CD14-positive monocyte (primary cell): ENCODE measurements at regions of chr9 and their contacts with region 1.

Region 1: GRCh38 chr9:75148561-75148960 is 60.2 kb downstream of the OSTF1 start:
- DNase-seq: no peak
- H3K4me3 ChIP-seq: peak overlapping the region in 1 of 3 experiments; percentile 20
- H3K4me3 Mint-ChIP-seq: no peak overlapping the region
- H3K27ac ChIP-seq: peak overlapping the region in 1 of 2 donors; percentile 73
- H3K27ac Mint-ChIP-seq: peak overlapping the region in 3 of 7 donors; percentile 55 to 82 (median 69)
- H3K4me1 ChIP-seq: peaks cover 36 to 64% of the 10 kb centered on the region in 2 donors
- H3K4me1 Mint-ChIP-seq: peaks cover 57% of the 10 kb centered on the region
- H3K27me3 ChIP-seq: no peaks in the 10 kb centered on the region
- H3K27me3 Mint-ChIP-seq: peaks cover 0 to 4% (median 0%) of the 10 kb centered on the region in 3 donors
- CTCF ChIP-seq: no peak

Region 2: DNA sequence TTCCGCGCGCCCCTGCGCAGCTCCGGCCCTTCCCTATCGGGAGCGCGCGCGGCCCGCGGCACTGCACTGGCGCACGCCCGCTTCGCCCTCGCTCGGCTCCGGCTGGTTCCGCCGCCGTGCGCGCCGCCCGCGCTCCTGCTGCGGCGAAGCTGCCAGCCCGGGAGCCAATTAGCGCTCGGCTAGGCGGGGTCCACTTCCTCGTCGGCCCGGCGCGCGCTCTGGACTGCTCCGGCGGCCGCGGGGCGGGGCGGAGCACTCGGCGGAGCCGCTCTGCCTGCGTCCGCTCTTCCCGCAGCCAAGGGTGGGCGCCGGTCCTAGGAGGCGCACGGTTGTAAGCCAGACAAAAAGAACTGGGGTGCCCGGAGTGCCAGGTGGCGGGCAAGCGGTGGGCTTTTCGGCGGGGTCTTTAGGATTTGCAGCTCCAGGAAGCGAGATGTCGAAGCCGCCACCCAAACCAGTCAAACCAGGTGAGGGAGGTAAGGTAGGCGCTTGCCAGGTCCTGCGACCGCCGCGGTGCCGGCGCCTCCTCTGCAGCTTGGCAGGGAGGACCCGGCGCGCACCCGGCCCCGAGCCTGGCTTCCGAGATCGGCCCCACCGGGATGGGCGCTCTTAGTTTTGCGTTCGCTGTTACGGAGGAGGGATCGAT is 60.2 kb before region 1 on chr9 and contains the start of gene OSTF1:
- intact Hi-C with region 1: loop called in 1 of 2 experiments (anchors 10 kb)
- DNase-seq: peak; percentile 95 to 96 (median 96)
- H3K4me3 ChIP-seq: peak within 1 kb of the TSS; percentile 69 to 98 (median 97)
- H3K4me3 Mint-ChIP-seq: peak within 1 kb of the TSS; percentile 95 to 100
- H3K27ac ChIP-seq: peak within 1 kb of the TSS; percentile 94 to 98
- H3K27ac Mint-ChIP-seq: peak within 1 kb of the TSS; percentile 90 to 96 (median 93)
- H3K4me1 ChIP-seq: peaks cover 45 to 47% of the 10 kb centered on the region in 2 donors
- H3K4me1 Mint-ChIP-seq: peaks cover 51% of the 10 kb centered on the region
- H3K27me3 ChIP-seq: no peaks in the 10 kb centered on the region
- H3K27me3 Mint-ChIP-seq: no peaks in the 10 kb centered on the region
- CTCF ChIP-seq: no peak
- polyA plus RNA-seq, gene OSTF1: 59.8 to 296 (median 240) TPM

Region 3: GRCh38 chr9:75108555-75108954 is 40.0 kb before region 1 on chr9:
- intact Hi-C with region 1: loop called in 1 of 2 experiments (anchors 5 kb)
- DNase-seq: peak; percentile 58 to 75 (median 74)
- H3K4me3 ChIP-seq: no peak overlapping the region
- H3K4me3 Mint-ChIP-seq: no peak overlapping the region
- H3K27ac ChIP-seq: peak overlapping the region; percentile 50 to 67
- H3K27ac Mint-ChIP-seq: peak overlapping the region; percentile 61 to 91 (median 87)
- H3K4me1 ChIP-seq: peaks cover 17 to 42% of the 10 kb centered on the region in 2 donors
- H3K4me1 Mint-ChIP-seq: peaks cover 65% of the 10 kb centered on the region
- H3K27me3 ChIP-seq: no peaks in the 10 kb centered on the region
- H3K27me3 Mint-ChIP-seq: no peaks in the 10 kb centered on the region
- CTCF ChIP-seq: no peak

Region 4: GRCh38 chr9:75130621-75131230 is 17.8 kb before region 1 on chr9:
- intact Hi-C with region 1: no loop called
- DNase-seq: no peak
- H3K4me3 ChIP-seq: no peak overlapping the region
- H3K4me3 Mint-ChIP-seq: no peak overlapping the region
- H3K27ac ChIP-seq: peak overlapping the region in 1 of 2 donors; percentile 77
- H3K27ac Mint-ChIP-seq: peak overlapping the region; percentile 27 to 77 (median 57)
- H3K4me1 ChIP-seq: peaks cover 10 to 12% of the 10 kb centered on the region in 2 donors
- H3K4me1 Mint-ChIP-seq: peaks cover 14% of the 10 kb centered on the region
- H3K27me3 ChIP-seq: no peaks in the 10 kb centered on the region
- H3K27me3 Mint-ChIP-seq: no peaks in the 10 kb centered on the region
- CTCF ChIP-seq: no peak

Region 5: DNA sequence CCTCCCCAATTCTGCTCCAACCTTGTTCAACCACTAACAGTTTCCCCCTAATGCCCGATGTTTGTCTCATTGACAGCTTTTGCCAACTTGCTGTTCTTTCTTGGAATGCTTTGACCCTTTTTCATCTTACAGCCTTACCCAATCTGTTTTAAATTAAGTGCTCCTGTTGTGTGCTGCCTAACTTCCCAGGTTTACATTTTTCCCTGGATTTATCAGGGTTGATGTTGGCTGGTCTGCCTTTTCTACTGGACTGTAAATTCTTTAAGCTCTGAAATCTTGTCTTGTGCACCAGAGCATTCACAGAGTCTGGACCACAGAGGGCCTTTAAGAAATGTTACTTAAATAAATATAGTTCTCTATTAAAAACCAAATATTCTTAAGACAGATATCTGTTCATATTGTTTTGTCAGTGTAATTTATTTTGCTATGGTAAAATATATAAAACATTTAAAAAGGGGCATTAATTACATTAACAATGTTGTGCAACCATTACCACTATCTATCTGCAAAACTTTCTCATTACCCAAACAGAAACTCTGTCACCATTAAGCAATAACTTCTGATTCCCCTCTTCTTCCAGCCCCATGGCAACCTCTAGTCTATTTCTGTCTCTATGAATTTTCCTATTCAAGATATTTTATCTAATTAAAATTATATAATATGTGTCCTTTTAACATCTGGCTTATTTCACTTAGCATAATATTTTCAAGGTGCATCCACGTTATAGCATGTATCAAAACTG is 12.7 kb after region 1 on chr9:
- intact Hi-C with region 1: no loop called
- DNase-seq: no peak
- H3K4me3 ChIP-seq: no peak overlapping the region
- H3K4me3 Mint-ChIP-seq: no peak overlapping the region
- H3K27ac ChIP-seq: peak overlapping the region in 1 of 2 donors; percentile 55
- H3K27ac Mint-ChIP-seq: peak overlapping the region in 2 of 7 donors; percentile 15 to 78
- H3K4me1 ChIP-seq: peaks cover 4 to 16% of the 10 kb centered on the region in 2 donors
- H3K4me1 Mint-ChIP-seq: peaks cover 18% of the 10 kb centered on the region
- H3K27me3 ChIP-seq: no peaks in the 10 kb centered on the region
- H3K27me3 Mint-ChIP-seq: no peaks in the 10 kb centered on the region
- CTCF ChIP-seq: no peak